Gastrocnemius medialis (tissue), 4 donors: ENCODE measurements at regions of chr5 and their contacts with region 1.

Region 1: DNA sequence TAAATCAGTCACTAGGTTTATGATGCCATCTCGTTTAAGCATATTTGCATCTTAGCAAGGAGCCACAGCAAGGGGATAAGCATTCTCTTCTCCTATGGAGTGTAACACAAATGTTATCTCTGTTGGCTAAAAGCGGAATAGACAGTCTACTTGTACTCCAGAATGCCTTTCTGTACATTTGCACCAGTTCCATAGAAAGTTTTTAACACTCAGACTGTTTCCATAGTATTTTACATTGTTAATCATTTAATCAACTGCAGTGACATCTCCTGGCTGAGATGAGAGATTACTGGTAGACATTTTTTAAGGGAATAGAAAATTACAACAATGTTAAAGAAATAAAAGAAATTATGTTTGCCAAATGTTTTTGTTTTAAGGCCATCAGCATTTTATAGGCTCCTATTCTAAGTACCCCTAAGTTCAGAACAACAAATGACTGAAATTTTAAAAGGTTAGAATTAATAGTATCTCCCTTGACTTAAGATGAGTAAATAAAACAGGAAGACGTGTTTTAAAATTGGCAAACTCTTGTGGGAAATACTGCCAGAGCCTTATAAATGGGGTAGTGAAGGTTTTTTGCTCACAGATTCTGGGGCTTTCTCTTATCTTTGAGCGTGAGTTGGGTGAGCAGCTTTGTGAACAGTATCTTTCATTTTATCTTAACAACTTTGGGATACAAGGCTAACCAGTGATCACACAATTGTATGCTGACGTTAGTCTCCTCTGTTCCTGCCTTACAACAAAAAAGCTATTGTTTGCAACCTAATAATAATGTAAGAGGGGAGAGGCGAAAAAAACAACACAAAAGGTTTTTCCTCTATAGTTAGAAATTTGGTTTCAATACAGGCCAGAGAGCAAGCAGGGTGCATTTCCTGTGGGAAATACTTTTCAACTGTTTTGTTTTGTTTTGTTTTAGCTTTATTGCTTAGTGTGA is 294.3 kb downstream of the FBXL7 start:
- DNase-seq: no peak
- ATAC-seq: no peak
- H3K4me3 ChIP-seq: no peak overlapping the region
- H3K27ac ChIP-seq: peak overlapping the region in 3 of 4 donors; percentile 42 to 56 (median 45)
- H3K4me1 ChIP-seq: no peaks in the 10 kb centered on the region
- H3K27me3 ChIP-seq: no peaks in the 10 kb centered on the region
- CTCF ChIP-seq: peak in 2 of 5 experiments; percentile 4 to 12
- POLR2A ChIP-seq: no peak

Region 2: GRCh38 chr5:15499528-15500324 is 294.6 kb before region 1 on chr5 and contains the start of gene FBXL7:
- in situ Hi-C with region 1: no loop called
- intact Hi-C with region 1: loop called (anchors 10 kb)
- DNase-seq: peak; percentile 44 to 55
- ATAC-seq: peak; percentile 71 to 72
- H3K4me3 ChIP-seq: peak within 1 kb of the TSS; percentile 50 to 65 (median 60)
- H3K27ac ChIP-seq: peak within 1 kb of the TSS; percentile 66 to 73 (median 72)
- H3K4me1 ChIP-seq: peaks cover 0 to 3% of the 10 kb centered on the region in 2 donors
- H3K27me3 ChIP-seq: peaks cover 0 to 4% (median 0%) of the 10 kb centered on the region in 3 donors
- CTCF ChIP-seq: no peak
- POLR2A ChIP-seq: peak; percentile 33 to 69
- total RNA-seq, gene FBXL7: 2.4 to 4.9 (median 3.1) TPM

Region 3: DNA sequence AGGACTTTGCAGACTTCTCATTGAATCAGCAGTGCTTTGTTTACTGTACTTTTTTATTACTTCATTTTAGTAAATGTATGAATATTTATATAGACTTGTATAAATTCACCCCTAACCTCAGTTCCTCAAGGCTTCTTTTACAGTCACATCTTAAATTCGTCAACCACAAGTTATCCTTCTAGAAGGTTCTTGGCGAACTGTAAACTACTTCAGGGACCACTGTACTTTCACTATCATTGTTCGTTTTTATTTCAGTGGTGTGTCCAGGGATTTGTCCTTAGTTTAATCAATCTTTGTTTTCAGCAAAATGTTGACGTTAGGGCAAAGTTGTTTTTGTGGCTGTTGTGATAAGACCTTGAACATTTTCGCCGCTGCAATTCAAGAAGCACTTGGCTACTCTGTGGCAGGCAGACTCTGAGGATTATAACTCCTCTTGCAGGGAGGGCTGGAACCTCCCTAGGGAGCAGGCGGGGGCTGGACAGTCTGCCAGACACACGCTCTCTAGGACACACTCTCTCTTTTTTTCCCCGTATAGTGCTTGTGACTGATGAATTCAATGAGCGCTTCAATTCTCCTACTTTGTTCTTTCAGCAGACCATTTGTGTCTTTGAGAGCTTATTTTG is 41.5 kb before region 1 on chr5:
- in situ Hi-C with region 1: no loop called
- intact Hi-C with region 1: no loop called
- DNase-seq: peak in 1 of 2 donors; percentile 13
- ATAC-seq: no peak
- H3K4me3 ChIP-seq: peak overlapping the region in 1 of 4 donors; percentile 17
- H3K27ac ChIP-seq: no peak overlapping the region
- H3K4me1 ChIP-seq: no peaks in the 10 kb centered on the region
- H3K27me3 ChIP-seq: no peaks in the 10 kb centered on the region
- CTCF ChIP-seq: no peak
- POLR2A ChIP-seq: no peak

Region 4: DNA sequence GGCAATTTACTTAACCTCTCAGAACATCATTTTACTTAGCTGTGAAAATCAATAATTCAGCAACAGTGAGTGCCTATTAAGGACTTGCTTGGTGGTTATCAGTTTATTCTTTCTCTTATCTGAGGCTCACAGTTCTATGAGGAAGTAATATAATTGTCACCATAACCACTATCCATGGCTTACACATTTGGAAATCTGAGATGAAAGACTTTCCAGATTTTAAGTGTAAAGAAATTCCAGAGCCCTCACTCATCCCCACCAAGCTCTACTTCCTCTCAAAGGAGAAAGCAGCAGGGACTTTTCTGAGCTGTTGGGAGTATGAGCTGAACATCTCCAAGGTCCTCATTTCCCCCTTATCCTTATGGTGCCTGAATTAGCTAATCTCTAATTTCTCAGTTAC is 27.2 kb after region 1 on chr5:
- in situ Hi-C with region 1: no loop called
- intact Hi-C with region 1: loop called (anchors 1 kb)
- DNase-seq: no peak
- ATAC-seq: no peak
- H3K4me3 ChIP-seq: no peak overlapping the region
- H3K27ac ChIP-seq: no peak overlapping the region
- H3K4me1 ChIP-seq: peaks cover 0 to 3% of the 10 kb centered on the region in 2 donors
- H3K27me3 ChIP-seq: no peaks in the 10 kb centered on the region
- CTCF ChIP-seq: no peak
- POLR2A ChIP-seq: no peak

Region 5: GRCh38 chr5:16304846-16305245 is 510.5 kb after region 1 on chr5:
- in situ Hi-C with region 1: no loop called
- intact Hi-C with region 1: no loop called
- DNase-seq: no peak
- ATAC-seq: no peak
- H3K4me3 ChIP-seq: no peak overlapping the region
- H3K27ac ChIP-seq: no peak overlapping the region
- H3K4me1 ChIP-seq: no peaks in the 10 kb centered on the region
- H3K27me3 ChIP-seq: no peaks in the 10 kb centered on the region
- CTCF ChIP-seq: no peak
- POLR2A ChIP-seq: no peak